AG04449 (cell line): ENCODE measurements at regions of chr3 and their contacts with region 1.

Region 1: GRCh38 chr3:190414297-190414696 is 26.3 kb downstream of the CLDN16 start:
- DNase-seq: no peak
- H3K4me3 ChIP-seq: no peak overlapping the region
- CTCF ChIP-seq: no peak

Region 2: DNA sequence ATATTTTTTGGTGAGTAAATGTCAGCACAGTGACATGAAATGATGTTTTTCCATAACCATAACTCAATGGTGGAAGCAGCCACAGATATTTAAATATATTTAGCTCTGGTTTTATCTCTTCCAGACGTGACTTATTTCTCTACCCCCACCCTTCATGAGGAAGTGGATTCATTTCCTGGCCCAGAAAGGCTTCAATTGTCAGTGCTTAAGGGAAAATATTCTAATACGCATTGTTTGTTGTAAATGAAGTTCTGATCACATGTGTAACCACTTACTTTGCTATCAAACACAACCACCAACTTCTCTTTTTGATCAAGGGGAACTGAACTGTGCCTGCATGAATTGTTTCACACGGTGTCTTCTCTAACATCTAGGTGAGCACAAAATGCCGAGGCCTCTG is 12.3 kb before region 1 on chr3:
- CTCF ChIA-PET with region 1: interaction called, 13 read pairs
- POLR2A ChIA-PET with region 1: no interaction called
- DNase-seq: no peak
- H3K4me3 ChIP-seq: no peak overlapping the region
- CTCF ChIP-seq: no peak